ENCODE measurements at regions of chr1 and their contacts with region 1.

Region 1: GRCh38 chr1:174074757-174075156 is 52.6 kb upstream of the RC3H1 start:
- DNase-seq: peak; percentile 55
- ATAC-seq: peak; percentile 76
- H3K4me3 ChIP-seq: no peak overlapping the region
- H3K27ac ChIP-seq: no peak overlapping the region
- H3K4me1 ChIP-seq: no peaks in the 10 kb centered on the region
- H3K27me3 ChIP-seq: no peaks in the 10 kb centered on the region
- CTCF ChIP-seq: peak; percentile 64
- POLR2A ChIP-seq: no peak
- RAD21 ChIP-seq: peak; percentile 72

Region 2: GRCh38 chr1:173240609-173241008 is 834.1 kb before region 1 on chr1:
- CTCF ChIA-PET with region 1: no interaction called
- POLR2A ChIA-PET with region 1: interaction called, 14 read pairs
- dilution Hi-C with region 1: no loop called
- in situ Hi-C with region 1: no loop called
- intact Hi-C with region 1: no loop called
- DNase-seq: no peak
- ATAC-seq: no peak
- H3K4me3 ChIP-seq: no peak overlapping the region
- H3K27ac ChIP-seq: no peak overlapping the region
- H3K4me1 ChIP-seq: no peaks in the 10 kb centered on the region
- H3K27me3 ChIP-seq: no peaks in the 10 kb centered on the region
- CTCF ChIP-seq: no peak
- POLR2A ChIP-seq: no peak
- RAD21 ChIP-seq: no peak

Region 3: DNA sequence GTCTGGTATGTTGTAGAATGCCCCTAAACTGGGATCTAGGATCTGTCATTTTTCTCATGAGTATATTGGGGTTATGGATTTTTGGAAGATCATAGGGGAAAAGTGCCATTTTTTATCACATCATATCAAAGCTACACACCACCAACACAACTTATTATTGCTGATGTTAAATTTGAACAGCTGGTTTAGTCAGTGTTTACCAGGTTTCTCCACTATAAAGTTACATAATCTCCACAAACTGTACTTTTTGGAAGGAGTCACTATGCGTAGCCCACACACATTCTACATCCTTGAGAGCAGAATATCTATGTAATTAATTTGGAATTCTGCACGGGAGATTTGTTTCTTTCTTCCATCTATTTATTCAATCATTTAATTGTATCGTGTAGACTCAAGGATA is 87.8 kb before region 1 on chr1:
- CTCF ChIA-PET with region 1: no interaction called
- POLR2A ChIA-PET with region 1: no interaction called
- dilution Hi-C with region 1: no loop called
- in situ Hi-C with region 1: loop called (anchors 10 kb)
- intact Hi-C with region 1: loop called (anchors 5 kb)
- DNase-seq: no peak
- ATAC-seq: no peak
- H3K4me3 ChIP-seq: no peak overlapping the region
- H3K27ac ChIP-seq: no peak overlapping the region
- H3K4me1 ChIP-seq: no peaks in the 10 kb centered on the region
- H3K27me3 ChIP-seq: no peaks in the 10 kb centered on the region
- CTCF ChIP-seq: no peak
- POLR2A ChIP-seq: no peak
- RAD21 ChIP-seq: no peak

Region 4: DNA sequence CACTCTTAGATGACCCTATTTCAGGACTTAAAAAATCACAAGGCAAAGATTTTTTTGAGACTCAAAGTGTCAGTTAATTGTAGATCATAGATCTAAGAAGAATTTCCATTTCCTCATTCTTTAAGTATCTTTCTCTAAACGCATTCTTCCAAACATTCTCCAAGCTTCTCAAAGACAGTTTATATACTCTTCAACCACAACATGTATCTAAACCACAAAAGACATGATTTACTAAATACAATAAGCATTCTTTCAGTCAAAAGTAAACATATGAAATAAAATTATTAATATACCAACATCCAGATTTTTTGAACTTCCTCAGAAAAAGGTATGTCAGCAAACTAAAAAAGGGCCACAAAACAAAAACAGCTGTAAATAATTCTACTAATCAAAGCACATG is 77.0 kb before region 1 on chr1:
- CTCF ChIA-PET with region 1: no interaction called
- POLR2A ChIA-PET with region 1: no interaction called
- dilution Hi-C with region 1: no loop called
- in situ Hi-C with region 1: loop called (anchors 10 kb)
- intact Hi-C with region 1: no loop called
- DNase-seq: peak; percentile 70
- ATAC-seq: peak; percentile 81
- H3K4me3 ChIP-seq: no peak overlapping the region
- H3K27ac ChIP-seq: no peak overlapping the region
- H3K4me1 ChIP-seq: peaks cover 19% of the 10 kb centered on the region
- H3K27me3 ChIP-seq: no peaks in the 10 kb centered on the region
- CTCF ChIP-seq: no peak
- POLR2A ChIP-seq: no peak
- RAD21 ChIP-seq: no peak

Region 5: DNA sequence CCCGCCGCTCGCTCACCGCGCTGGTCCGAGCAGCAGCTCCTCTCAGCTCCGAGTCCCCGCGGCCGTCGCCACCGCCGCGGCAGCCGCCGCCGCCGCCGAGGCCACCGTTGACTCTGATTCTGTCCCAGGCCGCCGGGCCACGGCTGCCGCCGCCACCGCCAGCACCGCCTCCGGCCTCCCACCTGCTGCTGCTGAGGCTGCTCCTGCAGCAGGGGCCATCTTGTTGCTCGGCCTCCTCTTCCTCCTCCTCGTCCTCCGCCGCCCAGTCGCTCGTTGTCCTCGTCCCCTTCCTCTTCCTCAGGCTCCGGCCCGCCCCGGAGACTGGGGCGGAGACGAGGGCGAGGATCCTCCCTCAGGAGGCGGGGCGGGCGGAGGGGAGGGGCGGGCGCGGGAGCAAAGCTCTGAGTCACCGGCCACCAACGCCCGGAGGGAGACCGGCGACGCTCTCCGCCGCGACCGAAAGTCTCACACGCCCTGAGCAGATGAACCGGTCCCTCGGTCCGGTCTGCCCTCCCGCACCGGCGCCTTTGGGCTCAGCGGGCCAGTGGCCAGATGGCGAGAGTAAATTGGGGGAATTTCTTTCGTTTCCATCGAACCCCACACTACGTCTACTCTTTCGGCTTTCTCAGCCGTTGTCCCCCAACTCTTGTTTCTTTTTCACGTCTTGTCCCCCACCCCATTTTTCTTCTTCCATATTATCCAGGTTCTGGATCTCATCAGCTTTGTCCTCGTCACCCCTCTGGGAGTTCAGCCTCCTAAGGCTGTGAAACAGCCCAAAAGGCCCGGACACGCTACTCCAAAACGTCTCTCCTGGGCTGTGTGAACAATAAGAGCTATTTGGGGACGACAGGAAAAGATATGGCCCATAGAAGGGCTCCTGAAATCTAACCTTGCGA is 52.4 kb before region 1 on chr1 and contains the start of gene RC3H1:
- CTCF ChIA-PET with region 1: no interaction called
- POLR2A ChIA-PET with region 1: no interaction called
- dilution Hi-C with region 1: no loop called
- in situ Hi-C with region 1: no loop called
- intact Hi-C with region 1: loop called (anchors 5 kb)
- DNase-seq: peak; percentile 75
- ATAC-seq: peak; percentile 97
- H3K4me3 ChIP-seq: peak within 1 kb of the TSS; percentile 99
- H3K27ac ChIP-seq: peak within 1 kb of the TSS; percentile 94
- H3K4me1 ChIP-seq: peaks cover 6% of the 10 kb centered on the region
- H3K27me3 ChIP-seq: no peaks in the 10 kb centered on the region
- CTCF ChIP-seq: no peak
- POLR2A ChIP-seq: peak; percentile 91
- RAD21 ChIP-seq: no peak
- total RNA-seq, gene RC3H1: 26.1 and 39.3 TPM in 2 replicates

Measured in IMR-90 (cell line).